Heart right ventricle (tissue), 16 donors: ENCODE measurements at regions of chr7 and their contacts with region 1.

Region 1: GRCh38 chr7:77798394-77799077 is at the starts of genes PHTF2 and TMEM60:
- DNase-seq: peak; percentile 98 to 99
- ATAC-seq: peak; percentile 95 to 99 (median 98)
- H3K4me3 ChIP-seq: peak within 1 kb of the TSS; percentile 81 to 97 (median 90)
- H3K27ac ChIP-seq: peak within 1 kb of the TSS; percentile 75 to 92 (median 86)
- H3K4me1 ChIP-seq: peaks cover 7 to 67% (median 38%) of the 10 kb centered on the region in 9 donors
- H3K27me3 ChIP-seq: no peaks in the 10 kb centered on the region
- CTCF ChIP-seq: peak; percentile 27 to 68 (median 42)
- total RNA-seq, gene PHTF2: 13.6 to 29.1 (median 25.6) TPM
- total RNA-seq, gene TMEM60: 4.7 to 9.9 (median 7.1) TPM

Region 2: GRCh38 chr7:77903597-77903996 is 105.1 kb after region 1 on chr7:
- intact Hi-C with region 1: loop called in 2 of 10 experiments (anchors 10 kb)
- DNase-seq: no peak
- ATAC-seq: peak in 3 of 8 donors; percentile 27 to 60 (median 55)
- H3K4me3 ChIP-seq: no peak overlapping the region
- H3K27ac ChIP-seq: no peak overlapping the region
- H3K4me1 ChIP-seq: peaks cover 0 to 10% (median 0%) of the 10 kb centered on the region in 9 donors
- H3K27me3 ChIP-seq: no peaks in the 10 kb centered on the region
- CTCF ChIP-seq: peak in 3 of 9 donors; percentile 18 to 32 (median 30)